ENCODE measurements at regions of chr1 and their contacts with region 1.

Region 1: DNA sequence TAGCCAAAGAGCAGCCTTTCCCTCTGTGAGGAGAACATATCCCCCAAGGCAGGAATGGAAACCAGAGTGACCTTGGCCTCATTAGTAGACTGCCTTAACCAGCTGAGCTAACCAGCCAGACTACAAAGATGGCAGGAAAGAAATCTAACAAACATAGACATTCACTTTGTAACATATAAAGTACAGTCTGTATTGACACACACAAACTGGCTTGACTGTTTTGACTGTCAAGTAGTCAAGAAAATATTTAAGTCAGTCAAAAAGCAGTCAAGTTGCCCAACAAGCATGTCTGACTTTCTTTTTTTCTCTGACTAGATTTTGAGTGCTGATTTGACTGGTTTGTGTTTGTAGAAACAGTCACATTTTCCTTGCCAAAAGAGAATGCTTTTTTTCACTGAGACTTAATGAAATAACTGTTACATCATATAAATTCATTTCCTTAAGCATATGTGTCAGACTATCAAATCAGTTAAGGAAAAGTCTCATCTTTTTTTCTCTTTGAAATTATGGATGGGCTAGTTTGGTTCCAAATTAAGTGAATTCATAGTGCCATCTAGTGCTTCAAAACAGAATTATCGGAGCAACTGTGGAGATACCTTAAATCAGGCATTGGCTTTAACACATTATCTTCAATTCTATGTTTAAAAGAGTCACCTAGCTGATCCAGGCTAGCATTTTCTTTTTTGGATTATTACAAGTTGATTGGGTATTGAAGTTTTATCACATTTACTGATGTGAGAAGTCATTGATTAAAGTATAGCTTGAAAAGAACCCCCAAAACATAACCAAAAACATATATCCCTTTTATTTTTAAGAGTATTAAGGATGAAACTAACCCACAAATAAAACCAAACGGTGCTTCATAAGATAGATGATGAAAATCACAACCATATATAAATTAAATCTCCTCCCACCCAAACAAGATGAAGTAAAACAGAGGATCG is 75.0 kb downstream of the ATP6V1G3 start:
- DNase-seq: peak in 2 of 4 experiments; percentile 19 to 54
- ATAC-seq: peak; percentile 89
- H3K4me3 ChIP-seq: no peak overlapping the region
- H3K27ac ChIP-seq: no peak overlapping the region
- H3K4me1 ChIP-seq: no peaks in the 10 kb centered on the region
- H3K27me3 ChIP-seq: no peaks in the 10 kb centered on the region
- CTCF ChIP-seq: peak; percentile 29 to 73 (median 47); a peak in 3 of 6 replicates
- EP300 ChIP-seq: no peak
- POLR2A ChIP-seq: no peak
- RAD21 ChIP-seq: peak; percentile 90 to 95

Region 2: GRCh38 chr1:197526736-197527371 is 938.6 kb before region 1 on chr1:
- CTCF ChIA-PET with region 1: interaction called, 11 read pairs
- POLR2A ChIA-PET with region 1: no interaction called
- in situ Hi-C with region 1: no loop called
- intact Hi-C with region 1: loop called (anchors 5 kb)
- DNase-seq: peak; percentile 21 to 55 (median 26)
- ATAC-seq: no peak
- H3K4me3 ChIP-seq: no peak overlapping the region
- H3K27ac ChIP-seq: no peak overlapping the region
- H3K4me1 ChIP-seq: no peaks in the 10 kb centered on the region
- H3K27me3 ChIP-seq: no peaks in the 10 kb centered on the region
- CTCF ChIP-seq: peak in 2 of 3 experiments; percentile 23 to 71; a peak in 3 of 6 replicates
- EP300 ChIP-seq: no peak
- POLR2A ChIP-seq: no peak
- RAD21 ChIP-seq: peak; percentile 62 to 73

Region 3: GRCh38 chr1:197614916-197615692 is 850.4 kb before region 1 on chr1:
- CTCF ChIA-PET with region 1: no interaction called
- POLR2A ChIA-PET with region 1: no interaction called
- in situ Hi-C with region 1: no loop called
- intact Hi-C with region 1: loop called (anchors 2 kb)
- DNase-seq: peak in 2 of 4 experiments; percentile 18 to 62
- ATAC-seq: peak; percentile 95
- H3K4me3 ChIP-seq: no peak overlapping the region
- H3K27ac ChIP-seq: no peak overlapping the region
- H3K4me1 ChIP-seq: no peaks in the 10 kb centered on the region
- H3K27me3 ChIP-seq: no peaks in the 10 kb centered on the region
- CTCF ChIP-seq: peak; percentile 63 to 74 (median 67)
- EP300 ChIP-seq: no peak
- POLR2A ChIP-seq: no peak
- RAD21 ChIP-seq: peak; percentile 85 to 88

Region 4: DNA sequence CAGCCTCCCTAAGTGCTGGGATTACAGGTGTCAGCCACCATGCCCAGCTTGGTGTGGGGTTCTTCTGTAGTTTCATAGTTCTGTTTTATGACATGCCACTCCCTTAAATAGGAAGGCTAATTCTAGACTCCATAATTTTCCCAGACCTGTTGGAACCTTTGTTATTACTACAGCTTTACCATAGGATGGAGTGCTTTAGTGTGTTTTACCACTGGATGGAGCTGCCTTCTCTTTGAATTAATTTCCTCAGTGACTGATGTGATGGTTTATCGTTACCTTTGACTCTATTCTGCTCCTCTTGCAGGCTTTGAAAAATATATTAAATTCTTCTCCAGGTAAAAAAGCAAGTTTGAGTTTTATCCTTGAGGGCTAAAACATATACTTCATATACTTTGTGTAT is 393.3 kb before region 1 on chr1:
- CTCF ChIA-PET with region 1: no interaction called
- POLR2A ChIA-PET with region 1: no interaction called
- in situ Hi-C with region 1: no loop called
- intact Hi-C with region 1: loop called (anchors 1 kb)
- DNase-seq: no peak
- ATAC-seq: peak; percentile 57; the same call in 2 of the 3 replicates
- H3K4me3 ChIP-seq: no peak overlapping the region
- H3K27ac ChIP-seq: no peak overlapping the region
- H3K4me1 ChIP-seq: no peaks in the 10 kb centered on the region
- H3K27me3 ChIP-seq: no peaks in the 10 kb centered on the region
- CTCF ChIP-seq: peak in 2 of 3 experiments; percentile 20 to 50; a peak in 3 of 6 replicates
- EP300 ChIP-seq: no peak
- POLR2A ChIP-seq: no peak
- RAD21 ChIP-seq: peak in 1 of 2 experiments; percentile 67; a peak in 2 of 4 replicates

Region 5: GRCh38 chr1:198088360-198089071 is 377.0 kb before region 1 on chr1:
- CTCF ChIA-PET with region 1: no interaction called
- POLR2A ChIA-PET with region 1: no interaction called
- in situ Hi-C with region 1: no loop called
- intact Hi-C with region 1: loop called (anchors 5 kb)
- DNase-seq: peak in 2 of 4 experiments; percentile 53 to 61
- ATAC-seq: peak; percentile 85
- H3K4me3 ChIP-seq: no peak overlapping the region
- H3K27ac ChIP-seq: no peak overlapping the region; the same call in 2 of the 3 replicates
- H3K4me1 ChIP-seq: peaks cover 0 to 6% of the 10 kb centered on the region in 2 experiments; a peak in 2 of 5 replicates
- H3K27me3 ChIP-seq: no peaks in the 10 kb centered on the region
- CTCF ChIP-seq: peak; percentile 59 to 80 (median 61); a peak in 5 of 6 replicates
- EP300 ChIP-seq: no peak
- POLR2A ChIP-seq: no peak
- RAD21 ChIP-seq: peak; percentile 84 to 86

Region 6: DNA sequence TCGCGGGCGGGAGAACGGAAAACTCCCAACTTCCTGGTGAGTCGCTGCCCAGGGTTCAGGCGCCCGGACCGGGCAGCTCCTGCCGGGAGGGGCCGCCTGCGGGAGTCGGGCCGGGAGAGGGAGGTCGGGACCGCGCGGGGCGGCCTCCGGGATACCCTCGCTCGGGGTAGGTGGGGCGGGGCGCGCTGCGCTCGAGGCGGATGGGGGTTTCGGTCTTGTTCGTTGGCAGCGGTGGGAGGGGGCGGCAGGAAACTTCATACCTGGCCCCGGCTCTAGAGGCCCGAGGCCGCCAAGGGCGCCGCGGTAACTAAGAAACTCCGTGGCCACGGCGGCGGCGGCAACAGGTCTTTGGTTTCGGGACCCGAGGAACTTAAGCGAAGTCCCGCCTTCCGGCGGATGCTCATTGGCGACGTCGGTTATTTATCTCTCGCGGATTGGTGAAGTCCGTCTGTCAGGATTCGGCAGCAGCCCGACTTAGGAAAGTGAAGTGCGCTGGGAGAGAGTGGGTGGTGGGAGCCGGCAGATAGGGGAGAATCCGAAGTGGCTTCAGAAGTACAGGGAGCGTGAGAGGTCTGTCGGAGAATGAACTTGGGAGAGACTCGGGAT is 308.1 kb before region 1 on chr1:
- CTCF ChIA-PET with region 1: no interaction called
- POLR2A ChIA-PET with region 1: no interaction called
- in situ Hi-C with region 1: no loop called
- intact Hi-C with region 1: loop called (anchors 5 kb)
- DNase-seq: peak; percentile 69 to 96 (median 80)
- ATAC-seq: peak; percentile 65
- H3K4me3 ChIP-seq: peak overlapping the region; percentile 82
- H3K27ac ChIP-seq: peak overlapping the region; percentile 85
- H3K4me1 ChIP-seq: peaks cover 10 to 13% of the 10 kb centered on the region in 2 experiments; a peak in 4 of 5 replicates
- H3K27me3 ChIP-seq: no peaks in the 10 kb centered on the region
- CTCF ChIP-seq: no peak
- EP300 ChIP-seq: no peak
- POLR2A ChIP-seq: no peak; the same call in none of the 2 replicates
- RAD21 ChIP-seq: no peak

Region 7: GRCh38 chr1:198333744-198334143 is 131.7 kb before region 1 on chr1:
- CTCF ChIA-PET with region 1: no interaction called
- POLR2A ChIA-PET with region 1: no interaction called
- in situ Hi-C with region 1: no loop called
- intact Hi-C with region 1: no loop called
- DNase-seq: no peak
- ATAC-seq: no peak
- H3K4me3 ChIP-seq: no peak overlapping the region
- H3K27ac ChIP-seq: no peak overlapping the region
- H3K4me1 ChIP-seq: no peaks in the 10 kb centered on the region
- H3K27me3 ChIP-seq: peaks cover 3 to 6% of the 10 kb centered on the region in 2 experiments; a peak in 1 of 5 replicates
- CTCF ChIP-seq: no peak
- EP300 ChIP-seq: no peak
- POLR2A ChIP-seq: no peak
- RAD21 ChIP-seq: no peak

Region 8: GRCh38 chr1:198359024-198359653 is 106.3 kb before region 1 on chr1:
- CTCF ChIA-PET with region 1: no interaction called
- POLR2A ChIA-PET with region 1: no interaction called
- in situ Hi-C with region 1: no loop called
- intact Hi-C with region 1: loop called (anchors 5 kb)
- DNase-seq: peak in 1 of 4 experiments; percentile 36
- ATAC-seq: peak; percentile 75
- H3K4me3 ChIP-seq: no peak overlapping the region
- H3K27ac ChIP-seq: no peak overlapping the region
- H3K4me1 ChIP-seq: no peaks in the 10 kb centered on the region
- H3K27me3 ChIP-seq: no peaks in the 10 kb centered on the region
- CTCF ChIP-seq: peak; percentile 43 to 56 (median 47); a peak in 5 of 6 replicates
- EP300 ChIP-seq: no peak
- POLR2A ChIP-seq: no peak
- RAD21 ChIP-seq: peak; percentile 62 to 74